Dendritic cell treated with granulocyte-macrophage colony-stimulating factor and Interleukin-4, amounts not matched to agents 40 ng/mL and 50 ng/mL, for 4 days (primary cell): ENCODE measurements at regions of chr6 and their contacts with region 1.

Region 1: GRCh38 chr6:87701676-87702588 is at the start of gene AKIRIN2:
- H3K4me3 Mint-ChIP-seq: peak within 1 kb of the TSS; percentile 94
- H3K27ac Mint-ChIP-seq: peak within 1 kb of the TSS; percentile 97
- H3K4me1 Mint-ChIP-seq: peaks cover 22% of the 10 kb centered on the region
- H3K27me3 Mint-ChIP-seq: no peaks in the 10 kb centered on the region

Region 2: DNA sequence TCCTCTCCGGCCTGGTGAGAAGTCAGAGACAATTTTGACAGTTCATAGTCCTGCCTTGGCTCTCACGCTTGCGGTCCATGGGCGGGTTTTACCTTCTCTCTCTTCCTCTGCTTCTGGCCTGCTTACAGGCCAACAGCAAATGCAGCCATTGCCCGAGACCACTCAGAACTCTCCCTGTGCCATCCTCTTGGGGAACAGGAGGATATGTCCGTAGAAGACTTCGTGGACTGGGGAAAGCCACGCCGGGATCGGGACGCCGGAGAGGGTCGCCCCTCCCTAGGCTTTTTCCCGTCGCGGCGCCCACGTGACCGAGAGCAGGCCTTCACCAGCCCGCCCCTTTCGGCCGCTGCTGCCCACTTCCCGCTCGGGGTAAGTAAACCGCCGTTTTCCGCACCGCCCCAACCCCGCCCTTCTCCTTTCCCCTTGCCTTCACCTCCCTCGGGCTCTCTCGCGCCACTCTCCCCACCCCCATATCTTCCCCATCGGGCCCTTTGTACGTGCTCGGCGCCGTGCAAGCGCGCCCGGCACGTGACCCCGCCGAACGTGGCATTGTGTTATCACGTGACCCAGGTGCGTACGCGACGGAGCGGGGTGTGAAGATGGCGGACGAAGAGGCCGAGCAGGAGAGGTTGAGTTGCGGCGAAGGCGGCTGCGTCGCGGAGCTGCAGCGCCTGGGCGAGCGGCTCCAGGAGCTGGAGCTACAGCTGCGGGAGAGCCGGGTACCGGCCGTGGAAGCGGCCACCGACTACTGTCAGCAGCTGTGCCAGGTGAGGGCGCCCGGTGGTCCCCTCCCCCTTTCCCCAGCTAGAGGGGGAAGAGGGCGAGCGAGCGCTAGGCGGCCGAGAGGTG is 546.7 kb before region 1 on chr6 and contains the start of gene ZNF292:
- intact Hi-C with region 1: loop called (anchors 10 kb)
- H3K4me3 Mint-ChIP-seq: peak within 1 kb of the TSS; percentile 98
- H3K27ac Mint-ChIP-seq: peak within 1 kb of the TSS; percentile 97
- H3K4me1 Mint-ChIP-seq: peaks cover 42% of the 10 kb centered on the region
- H3K27me3 Mint-ChIP-seq: peaks cover 13% of the 10 kb centered on the region

Region 3: GRCh38 chr6:87589693-87590549 is 112.0 kb before region 1 on chr6 and contains the starts of genes ORC3 and RARS2:
- intact Hi-C with region 1: loop called (anchors 2 kb)
- H3K4me3 Mint-ChIP-seq: peak within 1 kb of the TSS; percentile 86
- H3K27ac Mint-ChIP-seq: peak within 1 kb of the TSS; percentile 90
- H3K4me1 Mint-ChIP-seq: peaks cover 37% of the 10 kb centered on the region
- H3K27me3 Mint-ChIP-seq: no peaks in the 10 kb centered on the region

Region 4: GRCh38 chr6:87731818-87732661 is 30.1 kb after region 1 on chr6:
- intact Hi-C with region 1: loop called (anchors 1 kb)
- H3K4me3 Mint-ChIP-seq: no peak overlapping the region
- H3K27ac Mint-ChIP-seq: peak overlapping the region; percentile 76
- H3K4me1 Mint-ChIP-seq: peaks cover 47% of the 10 kb centered on the region
- H3K27me3 Mint-ChIP-seq: no peaks in the 10 kb centered on the region

Region 5: DNA sequence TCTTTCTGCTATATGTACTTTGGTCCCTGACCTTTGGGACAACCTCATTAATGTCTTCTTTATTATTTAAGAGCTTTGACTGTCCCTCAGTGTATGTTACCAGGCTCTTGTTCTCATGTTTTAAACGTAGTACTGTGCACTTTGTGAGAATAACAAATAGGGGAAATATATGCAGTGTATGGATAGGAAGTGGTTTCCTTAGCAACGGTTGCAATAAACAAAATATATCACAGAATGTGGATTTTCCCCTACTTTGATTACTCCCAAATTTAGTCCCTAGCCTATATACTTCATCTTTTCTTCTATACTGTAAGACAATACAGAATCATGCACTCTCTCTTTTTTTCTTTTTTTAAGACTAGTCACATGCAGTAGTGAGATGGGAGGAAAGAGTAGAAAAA is 123.9 kb after region 1 on chr6:
- intact Hi-C with region 1: loop called (anchors 1 kb)
- H3K4me3 Mint-ChIP-seq: no peak overlapping the region
- H3K27ac Mint-ChIP-seq: peak overlapping the region; percentile 79
- H3K4me1 Mint-ChIP-seq: peaks cover 39% of the 10 kb centered on the region
- H3K27me3 Mint-ChIP-seq: no peaks in the 10 kb centered on the region

Region 6: DNA sequence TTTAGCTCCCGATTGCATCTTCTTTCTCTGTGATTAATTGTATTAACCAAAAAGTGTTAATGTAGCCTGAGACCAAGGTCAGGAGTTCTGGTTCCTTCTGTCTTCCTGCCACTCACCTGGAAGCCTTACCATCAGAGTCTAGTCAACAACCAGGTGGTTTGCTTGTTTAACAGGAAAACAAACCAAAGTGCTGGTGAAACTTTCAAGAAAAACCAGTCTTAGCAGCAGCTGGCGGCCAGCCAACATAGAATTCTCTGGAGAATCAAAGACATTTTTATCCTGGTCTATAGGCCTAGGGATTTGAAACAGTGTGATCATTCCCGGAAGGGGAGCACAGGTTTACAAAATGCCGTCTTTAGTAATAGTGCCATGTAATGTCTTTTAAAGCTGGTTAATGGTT is 146.6 kb after region 1 on chr6:
- intact Hi-C with region 1: no loop called
- H3K4me3 Mint-ChIP-seq: no peak overlapping the region
- H3K27ac Mint-ChIP-seq: no peak overlapping the region
- H3K4me1 Mint-ChIP-seq: no peaks in the 10 kb centered on the region
- H3K27me3 Mint-ChIP-seq: no peaks in the 10 kb centered on the region